ENCODE measurements at regions of chr9 and their contacts with region 1.

Region 1: DNA sequence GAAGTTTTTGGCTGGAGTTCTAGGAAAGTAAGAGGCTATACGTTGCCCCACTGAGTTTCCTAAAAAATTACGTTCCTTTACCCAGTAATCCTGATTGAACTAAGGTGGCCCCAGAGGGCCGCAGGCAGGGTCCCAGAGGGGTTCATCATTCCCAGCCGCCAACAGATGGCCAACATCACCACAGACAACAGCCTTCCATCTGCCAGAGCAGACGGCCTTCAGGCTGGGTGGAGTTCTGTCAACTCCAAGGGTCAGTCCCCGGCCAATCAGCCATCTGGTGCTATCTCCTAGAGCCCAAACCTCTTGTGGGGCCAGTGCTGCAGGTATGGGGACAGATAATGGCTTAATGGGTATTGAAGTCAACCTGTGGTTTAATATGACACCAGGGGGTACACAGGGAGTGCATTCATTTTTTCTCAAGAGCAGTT is 30.4 kb downstream of the TBC1D2 start:
- DNase-seq: peak; percentile 97 to 98 (median 97)
- ATAC-seq: peak; percentile 96
- H3K4me3 ChIP-seq: no peak overlapping the region
- H3K27ac ChIP-seq: peak overlapping the region; percentile 58
- H3K4me1 ChIP-seq: peaks cover 17 to 27% of the 10 kb centered on the region in 2 experiments; a peak in 4 of 5 replicates
- H3K27me3 ChIP-seq: no peaks in the 10 kb centered on the region
- CTCF ChIP-seq: peak in 1 of 3 experiments; percentile 22; a peak in 2 of 6 replicates
- EP300 ChIP-seq: peak; percentile 97
- POLR2A ChIP-seq: no peak
- RAD21 ChIP-seq: peak; percentile 18 to 40; a peak in 2 of 4 replicates

Region 2: GRCh38 chr9:98150721-98151120 is 74.3 kb before region 1 on chr9:
- CTCF ChIA-PET with region 1: no interaction called
- POLR2A ChIA-PET with region 1: no interaction called
- in situ Hi-C with region 1: no loop called
- intact Hi-C with region 1: no loop called
- DNase-seq: no peak
- ATAC-seq: peak; percentile 42; the same call in 2 of the 3 replicates
- H3K4me3 ChIP-seq: no peak overlapping the region
- H3K27ac ChIP-seq: no peak overlapping the region
- H3K4me1 ChIP-seq: 0 out of 5 replicates have a peak, but pooled peaks cover 0 to 2% of the 10 kb centered on the region in 2 experiments
- H3K27me3 ChIP-seq: no peaks in the 10 kb centered on the region
- CTCF ChIP-seq: no peak
- EP300 ChIP-seq: no peak
- POLR2A ChIP-seq: no peak
- RAD21 ChIP-seq: no peak

Region 3: GRCh38 chr9:98241357-98242300 is 16.6 kb after region 1 on chr9:
- CTCF ChIA-PET with region 1: no interaction called
- POLR2A ChIA-PET with region 1: interaction called, 18 read pairs
- in situ Hi-C with region 1: no loop called
- intact Hi-C with region 1: loop called (anchors 1 kb)
- DNase-seq: peak in 2 of 4 experiments; percentile 28 to 49
- ATAC-seq: peak; percentile 76
- H3K4me3 ChIP-seq: no peak overlapping the region
- H3K27ac ChIP-seq: peak overlapping the region; percentile 21; the same call in 2 of the 3 replicates
- H3K4me1 ChIP-seq: peaks cover 23 to 38% of the 10 kb centered on the region in 2 experiments
- H3K27me3 ChIP-seq: no peaks in the 10 kb centered on the region
- CTCF ChIP-seq: peak; percentile 41 to 64 (median 54)
- EP300 ChIP-seq: no peak
- POLR2A ChIP-seq: no peak
- RAD21 ChIP-seq: peak in 1 of 2 experiments; percentile 39; a peak in 2 of 4 replicates

Region 4: GRCh38 chr9:98255578-98256296 is 30.7 kb after region 1 on chr9 and contains the start of gene TBC1D2:
- CTCF ChIA-PET with region 1: no interaction called
- POLR2A ChIA-PET with region 1: no interaction called
- in situ Hi-C with region 1: no loop called
- intact Hi-C with region 1: loop called (anchors 1 kb)
- DNase-seq: peak; percentile 95 to 97 (median 96)
- ATAC-seq: peak; percentile 92
- H3K4me3 ChIP-seq: peak within 1 kb of the TSS; percentile 73
- H3K27ac ChIP-seq: peak within 1 kb of the TSS; percentile 92
- H3K4me1 ChIP-seq: peaks cover 26 to 37% of the 10 kb centered on the region in 2 experiments; a peak in 4 of 5 replicates
- H3K27me3 ChIP-seq: no peaks in the 10 kb centered on the region
- CTCF ChIP-seq: peak in 2 of 3 experiments; percentile 22 to 39; a peak in 2 of 6 replicates
- EP300 ChIP-seq: no peak
- POLR2A ChIP-seq: peak; percentile 85
- RAD21 ChIP-seq: no peak
- polyA plus RNA-seq, gene TBC1D2: 0.10 to 0.21 TPM

Region 5: DNA sequence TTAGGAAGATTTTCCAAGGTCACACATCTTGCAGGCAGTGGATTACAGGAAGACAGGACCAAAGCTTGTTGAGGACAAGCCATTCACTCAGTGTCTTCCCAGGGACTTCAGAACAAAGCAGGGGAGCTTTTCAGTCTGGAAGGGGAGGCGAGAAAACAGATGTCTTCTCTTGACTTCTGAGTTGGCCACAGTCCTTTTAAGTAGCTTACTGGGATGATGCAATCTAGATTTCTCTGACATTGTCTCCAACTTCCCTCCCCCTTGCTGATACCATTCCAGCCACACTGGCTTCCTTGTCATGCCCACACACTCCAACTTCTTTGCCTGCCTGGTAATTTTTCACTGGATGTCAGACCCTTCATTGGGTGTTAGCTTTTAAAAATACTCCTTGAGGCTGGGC is 204.6 kb after region 1 on chr9:
- CTCF ChIA-PET with region 1: no interaction called
- POLR2A ChIA-PET with region 1: no interaction called
- in situ Hi-C with region 1: no loop called
- intact Hi-C with region 1: no loop called
- DNase-seq: peak in 2 of 4 experiments; percentile 31 to 49
- ATAC-seq: peak; percentile 71
- H3K4me3 ChIP-seq: no peak overlapping the region
- H3K27ac ChIP-seq: peak overlapping the region; percentile 63; the same call in 2 of the 3 replicates
- H3K4me1 ChIP-seq: peaks cover 13 to 31% of the 10 kb centered on the region in 2 experiments; a peak in 4 of 5 replicates
- H3K27me3 ChIP-seq: no peaks in the 10 kb centered on the region
- CTCF ChIP-seq: no peak
- EP300 ChIP-seq: 0 out of 2 replicates have a peak, but pooled peaks have one; percentile 28
- POLR2A ChIP-seq: no peak
- RAD21 ChIP-seq: peak in 1 of 2 experiments; percentile 30; a peak in 2 of 4 replicates